A549 (cell line): ENCODE measurements at regions of chr12 and their contacts with region 1.

Region 1: DNA sequence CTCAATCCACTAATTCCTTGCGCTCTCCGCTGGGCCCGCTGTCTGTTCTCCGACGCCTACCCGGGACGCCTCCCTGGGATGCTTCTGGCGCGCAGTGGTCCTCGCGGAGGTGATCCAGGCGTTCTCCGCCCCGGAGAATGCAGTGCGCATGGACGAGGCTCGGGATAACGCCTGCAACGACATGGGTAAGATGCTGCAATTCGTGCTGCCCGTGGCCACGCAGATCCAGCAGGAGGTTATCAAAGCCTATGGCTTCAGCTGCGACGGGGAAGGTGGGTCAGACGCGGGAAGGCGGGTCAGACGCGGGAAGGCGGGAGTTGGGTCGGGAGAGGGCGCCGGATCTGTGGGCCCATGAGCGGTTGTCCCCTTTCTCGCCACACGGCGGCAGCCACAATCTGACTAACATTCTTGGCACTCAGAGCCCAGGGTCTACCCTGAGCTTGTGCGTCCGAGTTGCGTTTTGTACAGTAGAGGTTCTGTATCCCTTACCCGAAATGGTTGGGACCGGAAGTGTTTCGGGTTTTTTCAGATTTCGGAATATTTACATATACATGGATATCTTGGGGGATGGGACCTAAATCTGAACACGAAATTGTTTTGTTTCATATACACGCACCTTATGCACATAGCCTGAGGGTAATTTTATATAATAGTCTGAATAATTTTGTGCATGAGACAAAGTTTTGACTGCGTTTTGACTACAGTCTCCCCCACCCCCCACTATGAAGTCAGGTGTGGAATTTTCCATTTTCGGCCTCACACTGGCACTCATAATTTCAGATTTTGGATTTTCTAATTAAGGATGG is 762 bp downstream of the C12orf57 start:
- DNase-seq: peak; percentile 93 to 97
- ATAC-seq: peak; percentile 52 to 73
- H3K4me3 ChIP-seq: peak overlapping the region; percentile 59
- H3K27ac ChIP-seq: peak overlapping the region; percentile 80 to 90
- H3K4me1 ChIP-seq: peaks cover 36% of the 10 kb centered on the region
- CTCF ChIP-seq: peak; percentile 85
- EP300 ChIP-seq: no peak
- POLR2A ChIP-seq: no peak; the same call in 1 of the 2 replicates
- RAD21 ChIP-seq: peak; percentile 87

Region 2: GRCh38 chr12:6867413-6868210 is 77.0 kb before region 1 on chr12 and contains the start of gene TPI1:
- CTCF ChIA-PET with region 1: interaction called, 80 read pairs
- POLR2A ChIA-PET with region 1: interaction called, 48 read pairs
- DNase-seq: peak; percentile 77 to 85
- ATAC-seq: peak; percentile 45 to 71
- H3K4me3 ChIP-seq: peak within 1 kb of the TSS; percentile 100
- H3K27ac ChIP-seq: peak within 1 kb of the TSS; percentile 97 to 99
- H3K4me1 ChIP-seq: peaks cover 42% of the 10 kb centered on the region
- CTCF ChIP-seq: no peak
- EP300 ChIP-seq: no peak
- POLR2A ChIP-seq: peak; percentile 99
- RAD21 ChIP-seq: no peak
- polyA plus RNA-seq, gene TPI1: 1,913 and 2,511 TPM in 2 replicates

Region 3: GRCh38 chr12:6914246-6914946 is 30.2 kb before region 1 on chr12 and contains the start of gene ENO2:
- CTCF ChIA-PET with region 1: interaction called, 370 read pairs
- POLR2A ChIA-PET with region 1: interaction called, 16 read pairs
- DNase-seq: peak; percentile 62 to 79
- ATAC-seq: peak; percentile 86 to 90
- H3K4me3 ChIP-seq: peak within 1 kb of the TSS; percentile 63
- H3K27ac ChIP-seq: peak within 1 kb of the TSS; percentile 74 to 93
- H3K4me1 ChIP-seq: peaks cover 17% of the 10 kb centered on the region
- CTCF ChIP-seq: no peak
- EP300 ChIP-seq: no peak
- POLR2A ChIP-seq: peak; percentile 39; the same call in 1 of the 2 replicates
- RAD21 ChIP-seq: no peak
- polyA plus RNA-seq, gene ENO2: 26.2 and 45.1 TPM in 2 replicates

Region 4: GRCh38 chr12:6978609-6979011 is 34.0 kb after region 1 on chr12:
- CTCF ChIA-PET with region 1: interaction called, 12 read pairs
- POLR2A ChIA-PET with region 1: interaction called, 7 read pairs
- DNase-seq: no peak
- ATAC-seq: peak in 1 of 2 experiments; percentile 35; a peak in 2 of 6 replicates
- H3K4me3 ChIP-seq: no peak overlapping the region
- H3K27ac ChIP-seq: peak overlapping the region in 1 of 2 experiments; percentile 7; a peak in 1 of 6 replicates
- H3K4me1 ChIP-seq: no peaks in the 10 kb centered on the region
- CTCF ChIP-seq: no peak
- EP300 ChIP-seq: no peak
- POLR2A ChIP-seq: no peak
- RAD21 ChIP-seq: no peak